PC-3 (cell line): ENCODE measurements at regions of chr5 and their contacts with region 1.

Region 1: GRCh38 chr5:55521881-55522280 is 12.9 kb downstream of the PLPP1 start:
- DNase-seq: no peak
- ATAC-seq: no peak
- H3K4me3 ChIP-seq: no peak overlapping the region
- H3K27ac ChIP-seq: no peak overlapping the region
- H3K4me1 ChIP-seq: peaks cover 4% of the 10 kb centered on the region; the same call in 1 of the 2 replicates
- H3K27me3 ChIP-seq: no peaks in the 10 kb centered on the region
- CTCF ChIP-seq: no peak

Region 2: DNA sequence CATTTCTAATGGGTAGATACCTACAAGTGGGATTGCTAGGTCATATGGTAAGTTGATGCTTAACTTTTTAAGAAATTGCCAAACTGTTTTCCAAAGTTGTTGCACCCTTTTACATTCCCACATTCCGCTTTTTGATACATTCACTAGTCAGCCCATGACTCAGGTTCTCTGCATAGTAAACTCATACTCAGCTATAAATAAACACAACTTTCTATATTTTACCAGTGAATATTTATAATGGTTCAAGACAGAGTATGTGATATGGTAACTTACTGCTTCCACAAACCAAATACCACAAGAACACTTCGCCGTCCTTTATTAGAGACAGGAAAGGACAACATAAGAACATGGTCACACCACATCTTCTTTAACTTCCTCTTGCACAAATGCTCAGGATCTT is 41.1 kb before region 1 on chr5:
- CTCF ChIA-PET with region 1: no interaction called
- POLR2A ChIA-PET with region 1: interaction called, 10 read pairs
- intact Hi-C with region 1: no loop called
- DNase-seq: peak; percentile 44
- ATAC-seq: peak; percentile 74
- H3K4me3 ChIP-seq: no peak overlapping the region
- H3K27ac ChIP-seq: no peak overlapping the region
- H3K4me1 ChIP-seq: peaks cover 10% of the 10 kb centered on the region
- H3K27me3 ChIP-seq: no peaks in the 10 kb centered on the region
- CTCF ChIP-seq: no peak

Region 3: DNA sequence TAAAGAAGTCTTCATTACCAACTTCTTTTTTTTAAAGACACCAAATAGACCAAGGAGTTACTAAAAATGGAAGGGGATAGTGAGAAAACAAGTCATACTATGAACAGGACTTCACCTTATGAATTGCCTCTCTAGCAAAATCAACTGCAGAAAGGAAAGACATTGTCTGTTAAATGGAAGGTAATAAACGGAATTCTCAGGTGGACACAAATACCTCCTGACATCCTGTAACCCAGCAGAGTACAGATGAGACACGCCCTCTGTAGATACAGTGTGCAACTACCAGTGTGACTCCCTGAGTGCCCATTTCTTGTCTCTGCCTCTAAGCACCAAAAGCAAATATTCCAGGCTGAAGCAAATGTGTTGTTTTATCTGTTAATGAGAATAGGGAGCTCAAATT is 25.1 kb after region 1 on chr5:
- CTCF ChIA-PET with region 1: no interaction called
- POLR2A ChIA-PET with region 1: no interaction called
- intact Hi-C with region 1: no loop called
- DNase-seq: peak; percentile 21
- ATAC-seq: peak; percentile 58; the same call in 1 of the 2 replicates
- H3K4me3 ChIP-seq: no peak overlapping the region
- H3K27ac ChIP-seq: no peak overlapping the region
- H3K4me1 ChIP-seq: no peaks in the 10 kb centered on the region
- H3K27me3 ChIP-seq: no peaks in the 10 kb centered on the region
- CTCF ChIP-seq: no peak; the same call in 1 of the 2 replicates